Ascending aorta (tissue), 2 donors: ENCODE measurements at regions of chr12 and their contacts with region 1.

Region 1: DNA sequence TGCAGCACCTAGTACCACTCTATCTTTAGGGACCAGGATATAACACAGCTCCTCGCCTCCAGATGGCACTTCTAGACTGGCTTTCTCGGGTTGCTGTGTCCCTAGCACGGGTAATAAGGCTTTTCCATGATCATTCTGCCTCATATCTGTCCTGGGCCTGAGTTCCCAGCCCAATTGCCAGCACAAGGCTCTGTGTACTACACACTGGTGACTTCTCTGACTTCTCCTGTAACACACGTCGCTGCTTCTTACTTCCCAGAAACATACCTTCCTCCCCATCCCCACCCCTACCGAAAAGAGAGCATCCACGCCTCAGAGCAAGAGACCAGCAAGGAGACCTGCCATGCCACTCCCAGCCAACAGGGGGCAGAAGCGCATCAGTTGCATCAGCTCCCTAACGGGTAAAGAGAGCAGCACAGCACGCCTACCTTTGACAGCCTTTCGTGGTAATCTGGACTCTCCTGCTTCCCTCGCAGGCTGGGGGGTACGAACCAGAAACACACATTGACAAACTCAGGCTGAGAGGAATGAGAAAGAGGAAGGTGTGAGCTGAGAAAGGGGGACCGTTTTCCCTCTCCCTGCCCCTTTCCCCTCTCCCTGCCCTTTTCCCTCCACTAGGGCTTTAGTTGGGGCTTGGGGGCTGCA is 21.2 kb upstream of the ZNF740 start:
- DNase-seq: peak; percentile 33 to 95
- H3K4me3 ChIP-seq: no peak overlapping the region
- H3K27ac ChIP-seq: peak overlapping the region; percentile 73 to 96
- H3K4me1 ChIP-seq: peaks cover 13 to 33% of the 10 kb centered on the region in 2 donors
- H3K27me3 ChIP-seq: no peaks in the 10 kb centered on the region
- CTCF ChIP-seq: peak; percentile 95 to 99 (median 98)

Region 2: GRCh38 chr12:52951640-52952431 is 207.5 kb before region 1 on chr12:
- intact Hi-C with region 1: no loop called
- DNase-seq: no peak
- H3K4me3 ChIP-seq: no peak overlapping the region
- H3K27ac ChIP-seq: no peak overlapping the region
- H3K4me1 ChIP-seq: peaks cover 0 to 6% of the 10 kb centered on the region in 2 donors
- H3K27me3 ChIP-seq: no peaks in the 10 kb centered on the region
- CTCF ChIP-seq: no peak

Region 3: DNA sequence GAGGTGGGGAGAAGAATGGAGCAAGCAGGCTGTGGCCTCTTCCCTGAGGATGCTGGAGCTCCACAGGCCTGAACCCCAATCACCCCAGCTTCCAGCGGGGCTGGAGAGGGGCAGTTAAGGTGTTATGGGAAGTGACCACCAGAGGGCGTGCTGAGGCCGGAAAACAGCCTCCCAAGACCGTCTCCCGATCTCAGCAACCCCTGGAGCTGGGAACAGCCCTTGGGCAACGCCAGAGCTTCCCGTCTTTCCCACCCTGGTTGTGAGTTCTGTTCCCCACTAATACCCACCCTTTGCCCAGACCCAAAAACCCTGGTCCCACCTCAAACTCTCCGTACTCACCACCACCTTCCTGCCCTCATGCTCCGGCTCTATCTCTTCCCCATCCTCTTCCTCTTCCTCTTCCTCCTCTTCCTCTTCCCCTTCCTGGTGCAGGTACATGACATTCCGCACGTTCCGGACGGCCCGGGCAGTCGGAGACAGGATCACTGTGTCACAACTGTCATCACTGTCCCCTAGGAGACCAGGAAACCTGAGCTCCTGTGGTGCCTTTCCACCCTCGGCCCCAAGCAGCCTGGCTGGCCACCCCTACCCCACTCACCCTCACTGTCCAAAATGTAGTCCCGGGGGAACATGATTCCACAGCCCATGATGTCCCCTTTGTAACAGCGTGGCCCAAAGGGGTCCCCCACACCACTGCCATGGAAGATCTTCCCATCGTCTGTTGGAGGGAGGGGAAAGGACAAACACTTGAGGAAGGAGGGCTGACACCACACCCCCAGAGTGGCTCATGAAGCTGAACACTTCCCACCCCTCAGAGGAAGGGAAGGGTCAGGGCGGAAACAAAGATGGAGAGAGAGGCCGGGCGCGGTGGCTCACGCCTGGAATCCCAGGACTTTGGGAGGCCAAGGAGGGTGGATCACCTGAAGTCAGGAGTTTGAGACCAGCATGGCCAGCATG is 93.1 kb before region 1 on chr12:
- intact Hi-C with region 1: loop called (anchors 2 kb)
- DNase-seq: peak in 1 of 2 donors; percentile 91
- H3K4me3 ChIP-seq: peak overlapping the region in 1 of 2 donors; percentile 28
- H3K27ac ChIP-seq: peak overlapping the region; percentile 83 to 95
- H3K4me1 ChIP-seq: peaks cover 27 to 64% of the 10 kb centered on the region in 2 donors
- H3K27me3 ChIP-seq: no peaks in the 10 kb centered on the region
- CTCF ChIP-seq: peak; percentile 85 to 95 (median 88)

Region 4: DNA sequence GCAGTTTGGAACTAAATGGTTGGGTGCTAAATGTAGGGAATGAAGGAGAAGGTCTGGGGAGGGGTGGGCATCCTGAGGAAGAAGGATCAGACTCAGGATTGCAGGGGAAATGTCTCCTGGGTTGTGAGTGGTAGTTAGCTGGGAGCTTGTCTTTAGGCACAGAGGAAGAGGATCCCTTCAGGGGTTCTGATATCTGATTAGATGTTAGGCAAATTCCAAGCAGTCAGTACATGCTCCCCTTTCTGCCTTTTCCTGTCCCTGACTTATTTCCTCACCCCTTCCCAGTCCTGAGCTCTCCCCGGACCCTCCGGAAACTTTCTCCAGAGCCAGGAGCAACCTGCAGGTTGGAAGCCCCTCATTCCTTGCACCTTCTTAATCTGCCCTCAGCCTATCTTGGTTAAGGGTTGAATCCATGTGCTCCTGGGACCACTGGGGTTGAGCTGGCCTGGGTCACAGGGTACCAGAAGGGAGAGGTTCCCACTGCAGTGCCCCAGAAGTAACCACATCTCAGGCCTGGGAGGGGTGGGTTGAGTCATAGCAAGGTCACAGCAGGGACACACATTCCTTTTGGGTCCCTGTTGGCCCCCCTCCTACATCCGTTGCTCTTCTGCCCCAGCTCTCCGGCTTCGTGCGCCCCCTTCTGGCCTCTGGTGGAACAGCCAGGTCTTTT is 60.2 kb before region 1 on chr12:
- intact Hi-C with region 1: loop called (anchors 5 kb)
- DNase-seq: peak; percentile 80 to 97
- H3K4me3 ChIP-seq: peak overlapping the region; percentile 85 to 86
- H3K27ac ChIP-seq: peak overlapping the region; percentile 97
- H3K4me1 ChIP-seq: peaks cover 0 to 22% of the 10 kb centered on the region in 2 donors
- H3K27me3 ChIP-seq: no peaks in the 10 kb centered on the region
- CTCF ChIP-seq: peak; percentile 94 to 98 (median 96)

Region 5: GRCh38 chr12:53115891-53116648 is 43.2 kb before region 1 on chr12:
- intact Hi-C with region 1: loop called (anchors 2 kb)
- DNase-seq: peak in 1 of 2 donors; percentile 83
- H3K4me3 ChIP-seq: no peak overlapping the region
- H3K27ac ChIP-seq: peak overlapping the region; percentile 90 to 95
- H3K4me1 ChIP-seq: peaks cover 6 to 28% of the 10 kb centered on the region in 2 donors
- H3K27me3 ChIP-seq: no peaks in the 10 kb centered on the region
- CTCF ChIP-seq: no peak

Region 6: GRCh38 chr12:53190108-53190729 is 30.9 kb after region 1 on chr12:
- intact Hi-C with region 1: loop called (anchors 1 kb)
- DNase-seq: peak in 1 of 2 donors; percentile 80
- H3K4me3 ChIP-seq: no peak overlapping the region
- H3K27ac ChIP-seq: peak overlapping the region; percentile 57 to 60
- H3K4me1 ChIP-seq: peaks cover 0 to 6% of the 10 kb centered on the region in 2 donors
- H3K27me3 ChIP-seq: no peaks in the 10 kb centered on the region
- CTCF ChIP-seq: peak; percentile 82 to 84 (median 82)

Region 7: DNA sequence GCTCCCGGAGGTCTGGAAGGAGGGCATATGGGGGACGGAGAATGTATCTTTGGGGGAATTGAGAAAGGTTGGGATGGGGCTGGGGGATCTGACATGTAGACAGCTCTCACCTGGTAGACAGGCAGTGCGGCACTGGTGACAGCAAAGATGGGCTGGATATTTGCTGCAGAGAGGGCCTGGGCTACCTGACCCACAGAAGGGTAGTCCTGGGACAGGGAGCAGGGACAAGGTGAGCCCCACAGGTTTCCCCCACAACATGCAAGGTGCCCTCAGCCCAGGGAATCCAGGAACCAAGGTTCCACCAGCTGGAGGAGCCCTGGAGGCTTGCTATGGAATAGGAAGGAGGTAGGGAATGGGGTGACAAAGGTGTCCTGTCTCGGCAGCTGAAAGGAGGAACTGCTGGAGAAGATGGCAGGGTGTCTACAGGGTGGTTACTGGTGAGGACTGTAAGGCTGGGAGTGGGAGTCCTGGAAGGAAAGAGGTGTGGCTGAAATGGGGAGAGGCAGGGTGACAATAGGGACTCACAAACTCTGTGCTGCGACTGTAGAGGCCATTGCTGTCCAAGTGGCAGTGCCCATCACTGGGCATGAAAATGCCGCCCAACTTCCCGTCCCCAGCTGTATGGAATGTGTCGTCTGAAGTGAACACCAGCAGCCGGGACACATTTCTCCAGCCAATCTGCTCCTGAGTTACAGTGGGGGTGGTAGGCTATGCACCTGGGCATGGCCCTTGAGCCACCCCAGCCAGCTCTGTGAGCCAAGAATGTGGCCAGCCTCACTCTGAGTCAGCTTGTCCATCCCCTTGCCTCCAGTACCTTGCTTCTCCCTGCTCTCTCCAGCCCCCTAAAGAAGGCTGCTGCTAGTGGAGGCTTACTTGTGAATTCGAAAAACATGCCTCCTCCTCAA is 36.5 kb after region 1 on chr12:
- intact Hi-C with region 1: loop called (anchors 1 kb)
- DNase-seq: no peak
- H3K4me3 ChIP-seq: no peak overlapping the region
- H3K27ac ChIP-seq: no peak overlapping the region
- H3K4me1 ChIP-seq: peaks cover 3 to 4% of the 10 kb centered on the region in 2 donors
- H3K27me3 ChIP-seq: no peaks in the 10 kb centered on the region
- CTCF ChIP-seq: no peak

Region 8: GRCh38 chr12:53287741-53288216 is 128.5 kb after region 1 on chr12:
- intact Hi-C with region 1: loop called (anchors 1 kb)
- DNase-seq: peak in 1 of 2 donors; percentile 77
- H3K4me3 ChIP-seq: no peak overlapping the region
- H3K27ac ChIP-seq: no peak overlapping the region
- H3K4me1 ChIP-seq: no peaks in the 10 kb centered on the region
- H3K27me3 ChIP-seq: no peaks in the 10 kb centered on the region
- CTCF ChIP-seq: peak; percentile 51 to 60 (median 60)

Region 9: GRCh38 chr12:53299454-53300180 is 140.3 kb after region 1 on chr12 and contains the start of gene MYG1:
- intact Hi-C with region 1: no loop called
- DNase-seq: peak; percentile 25 to 90
- H3K4me3 ChIP-seq: peak within 1 kb of the TSS; percentile 65 to 83
- H3K27ac ChIP-seq: peak within 1 kb of the TSS; percentile 57 to 69
- H3K4me1 ChIP-seq: peaks cover 10 to 31% of the 10 kb centered on the region in 2 donors
- H3K27me3 ChIP-seq: no peaks in the 10 kb centered on the region
- CTCF ChIP-seq: peak in 2 of 3 experiments; percentile 12 to 32
- total RNA-seq, gene MYG1: 27.5 TPM